ENCODE measurements at regions of chr11 and their contacts with region 1.

Region 1: GRCh38 chr11:14358729-14359439 is at the start of gene RRAS2:
- DNase-seq: peak; percentile 72
- H3K4me3 Mint-ChIP-seq: peak within 1 kb of the TSS; percentile 99
- H3K27ac Mint-ChIP-seq: peak within 1 kb of the TSS; percentile 94
- H3K4me1 Mint-ChIP-seq: peaks cover 63% of the 10 kb centered on the region
- H3K27me3 Mint-ChIP-seq: peaks cover 2% of the 10 kb centered on the region
- total RNA-seq, gene RRAS2: 82.4 and 84.1 TPM in 2 replicates

Region 2: GRCh38 chr11:14094481-14095037 is 264.3 kb before region 1 on chr11:
- intact Hi-C with region 1: no loop called
- DNase-seq: no peak
- H3K4me3 Mint-ChIP-seq: no peak overlapping the region
- H3K27ac Mint-ChIP-seq: no peak overlapping the region
- H3K4me1 Mint-ChIP-seq: no peaks in the 10 kb centered on the region
- H3K27me3 Mint-ChIP-seq: peaks cover 3% of the 10 kb centered on the region

Region 3: GRCh38 chr11:14300661-14301304 is 58.1 kb before region 1 on chr11:
- intact Hi-C with region 1: loop called (anchors 1 kb)
- DNase-seq: peak; percentile 25
- H3K4me3 Mint-ChIP-seq: no peak overlapping the region
- H3K27ac Mint-ChIP-seq: no peak overlapping the region
- H3K4me1 Mint-ChIP-seq: peaks cover 17% of the 10 kb centered on the region
- H3K27me3 Mint-ChIP-seq: no peaks in the 10 kb centered on the region

Region 4: GRCh38 chr11:14320020-14320419 is 38.9 kb before region 1 on chr11:
- intact Hi-C with region 1: loop called (anchors 1 kb)
- DNase-seq: peak; percentile 34
- H3K4me3 Mint-ChIP-seq: peak overlapping the region; percentile 50
- H3K27ac Mint-ChIP-seq: peak overlapping the region; percentile 44
- H3K4me1 Mint-ChIP-seq: peaks cover 83% of the 10 kb centered on the region
- H3K27me3 Mint-ChIP-seq: no peaks in the 10 kb centered on the region

Region 5: DNA sequence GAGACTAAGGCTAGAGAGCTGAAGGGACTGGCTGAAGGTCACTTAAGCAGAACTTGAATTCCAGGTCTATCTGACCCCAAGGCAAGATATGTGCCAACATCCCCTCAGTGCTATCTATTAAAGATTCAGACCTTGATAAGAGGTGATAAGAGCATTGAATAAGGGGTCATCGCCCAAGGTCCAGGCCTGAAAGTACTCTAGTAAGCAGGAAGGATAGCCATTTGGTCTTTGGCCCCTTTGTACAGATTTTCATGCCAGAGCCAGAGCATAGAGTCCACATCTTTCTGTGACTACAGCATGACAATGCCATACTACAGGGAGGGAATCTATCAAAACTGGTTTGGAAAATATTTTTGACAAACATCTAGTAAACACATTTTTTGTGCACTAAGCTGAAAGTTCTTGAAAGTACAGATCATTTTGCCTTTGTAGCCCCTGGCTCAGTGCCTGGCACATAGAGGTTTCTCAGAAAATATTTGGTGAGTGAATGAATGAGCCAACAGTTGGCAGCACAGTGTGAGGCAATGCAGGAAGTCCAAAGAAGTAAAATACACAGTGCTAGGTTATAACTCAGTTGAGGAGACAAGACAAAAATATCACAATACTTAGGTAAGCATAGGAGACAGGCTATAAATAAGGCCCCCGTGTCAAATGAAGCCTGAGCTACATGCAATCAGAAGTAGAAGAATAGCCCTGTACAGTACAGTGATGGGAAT is 15.2 kb after region 1 on chr11:
- intact Hi-C with region 1: loop called (anchors 1 kb)
- DNase-seq: no peak
- H3K4me3 Mint-ChIP-seq: no peak overlapping the region
- H3K27ac Mint-ChIP-seq: peak overlapping the region; percentile 54
- H3K4me1 Mint-ChIP-seq: peaks cover 60% of the 10 kb centered on the region
- H3K27me3 Mint-ChIP-seq: peaks cover 6% of the 10 kb centered on the region

Region 6: GRCh38 chr11:14454861-14455632 is 96.2 kb after region 1 on chr11:
- intact Hi-C with region 1: loop called (anchors 2 kb)
- DNase-seq: no peak
- H3K4me3 Mint-ChIP-seq: no peak overlapping the region
- H3K27ac Mint-ChIP-seq: no peak overlapping the region
- H3K4me1 Mint-ChIP-seq: no peaks in the 10 kb centered on the region
- H3K27me3 Mint-ChIP-seq: no peaks in the 10 kb centered on the region

Region 7: GRCh38 chr11:14611939-14612338 is 253.1 kb after region 1 on chr11:
- intact Hi-C with region 1: no loop called
- DNase-seq: no peak
- H3K4me3 Mint-ChIP-seq: peak overlapping the region; percentile 15
- H3K27ac Mint-ChIP-seq: peak overlapping the region; percentile 57
- H3K4me1 Mint-ChIP-seq: peaks cover 41% of the 10 kb centered on the region
- H3K27me3 Mint-ChIP-seq: no peaks in the 10 kb centered on the region

Measured in activated T-helper 1 cell treated with anti-CD3 and anti-CD28 coated beads, Interleukin-12 subunit alpha, Interleukin-12 subunit beta, Interleukin-2, Interleukin-4 antibody, amounts not matched to agents 30 ng/mL and 10 ng/mL and 1 ng/mL, durations not matched to agents 14 hours and 24 hours and 36 hours (primary cell).